AG04449 (cell line): ENCODE measurements at regions of chr17 and their contacts with region 1.

Region 1: GRCh38 chr17:8057691-8058114 is 18.8 kb downstream of the ALOX15B start:
- DNase-seq: no peak
- H3K4me3 ChIP-seq: no peak overlapping the region
- CTCF ChIP-seq: peak; percentile 68

Region 2: GRCh38 chr17:7589204-7589868 is 468.4 kb before region 1 on chr17:
- CTCF ChIA-PET with region 1: no interaction called
- POLR2A ChIA-PET with region 1: no interaction called
- DNase-seq: no peak
- H3K4me3 ChIP-seq: peak overlapping the region; percentile 6; the same call in 1 of the 2 replicates
- CTCF ChIP-seq: peak; percentile 89

Region 3: DNA sequence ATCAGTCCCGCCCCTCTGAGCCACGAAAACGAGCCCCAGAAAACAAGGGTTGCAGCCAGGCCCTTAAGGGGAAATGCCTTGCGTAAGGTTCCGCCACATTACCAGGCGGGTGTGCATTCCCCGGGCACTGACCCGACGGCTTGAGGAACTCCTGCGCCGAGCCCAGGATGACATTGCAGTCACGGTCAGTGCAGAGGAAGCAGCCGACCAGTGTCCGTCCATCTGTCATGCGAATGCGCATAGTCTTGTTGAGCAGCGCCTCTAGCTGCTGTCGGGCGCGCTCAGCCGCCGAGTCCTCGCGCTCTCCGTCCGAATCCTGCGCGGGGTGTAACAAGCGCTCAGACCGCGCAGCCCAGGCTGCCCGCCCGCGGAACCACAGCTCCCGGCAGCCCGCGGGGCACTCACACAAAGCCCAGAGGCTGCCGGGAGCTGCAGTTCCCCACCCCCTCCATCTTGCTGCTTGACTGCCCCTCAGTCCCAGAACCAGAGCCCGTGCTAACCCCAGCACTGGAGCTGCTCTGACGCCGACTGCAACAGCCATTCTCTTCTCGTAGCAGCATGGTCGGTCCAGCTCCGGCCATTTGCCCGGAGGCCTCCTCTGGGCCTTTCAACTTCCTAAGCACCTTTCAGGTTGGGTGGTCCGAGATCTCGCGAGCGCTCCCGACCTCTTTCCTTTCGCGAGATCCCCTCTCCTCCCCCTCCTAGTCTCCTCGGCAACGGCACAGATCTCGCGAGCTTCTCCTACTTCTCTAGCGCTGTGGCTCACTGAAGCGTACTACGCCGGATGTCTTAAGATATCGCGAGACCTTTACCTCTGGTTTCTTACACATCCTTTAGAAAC is 200.6 kb before region 1 on chr17 and contains the start of gene NAA38:
- CTCF ChIA-PET with region 1: interaction called, 77 read pairs
- POLR2A ChIA-PET with region 1: no interaction called
- DNase-seq: peak; percentile 97
- H3K4me3 ChIP-seq: peak within 1 kb of the TSS; percentile 80
- CTCF ChIP-seq: peak; percentile 71

Region 4: DNA sequence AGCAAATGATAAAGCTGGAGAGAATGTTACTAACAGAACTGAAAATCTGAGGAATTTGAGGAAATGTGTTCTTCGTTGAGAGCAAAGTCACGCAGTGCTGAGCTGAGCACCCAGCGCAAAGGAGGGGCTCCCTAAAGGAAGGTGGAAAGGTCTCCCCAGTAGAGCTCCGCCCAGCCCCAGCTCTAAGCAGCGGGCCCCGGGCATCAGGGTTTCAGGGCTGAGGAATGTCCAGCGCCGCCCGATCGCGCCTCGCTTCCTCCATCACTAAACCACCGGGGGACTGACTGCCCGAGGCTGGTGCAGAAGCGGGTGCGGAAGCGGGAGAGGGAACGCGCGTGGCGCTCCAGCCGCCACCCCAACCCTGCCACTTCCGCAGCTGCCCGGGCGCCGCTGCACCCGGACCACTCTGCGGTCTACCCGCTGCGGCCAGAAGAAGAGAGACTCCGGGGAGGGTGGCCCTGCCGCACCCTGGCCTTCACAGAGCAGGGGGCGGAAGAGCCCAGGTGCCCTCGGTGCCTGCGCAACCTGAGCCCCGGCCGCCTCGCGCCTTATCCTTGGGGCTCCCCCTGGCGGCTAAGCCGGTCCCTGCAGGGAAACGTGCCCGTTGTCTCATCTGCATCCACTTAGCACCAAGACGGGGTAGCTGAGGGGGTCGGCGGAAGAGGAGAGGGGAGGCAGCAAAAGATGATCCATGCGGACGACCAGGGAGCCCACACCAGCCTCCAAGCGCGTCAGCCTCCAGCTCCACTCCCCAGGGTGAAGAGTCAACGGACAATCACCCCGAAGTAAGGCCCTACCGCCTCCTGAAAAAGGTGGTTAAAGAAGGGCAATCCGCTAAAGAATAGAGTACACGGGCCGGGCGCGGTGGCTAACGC is 67.7 kb before region 1 on chr17:
- CTCF ChIA-PET with region 1: interaction called, 61 read pairs
- POLR2A ChIA-PET with region 1: no interaction called
- DNase-seq: no peak
- H3K4me3 ChIP-seq: peak overlapping the region; percentile 66
- CTCF ChIP-seq: peak; percentile 97

Region 5: DNA sequence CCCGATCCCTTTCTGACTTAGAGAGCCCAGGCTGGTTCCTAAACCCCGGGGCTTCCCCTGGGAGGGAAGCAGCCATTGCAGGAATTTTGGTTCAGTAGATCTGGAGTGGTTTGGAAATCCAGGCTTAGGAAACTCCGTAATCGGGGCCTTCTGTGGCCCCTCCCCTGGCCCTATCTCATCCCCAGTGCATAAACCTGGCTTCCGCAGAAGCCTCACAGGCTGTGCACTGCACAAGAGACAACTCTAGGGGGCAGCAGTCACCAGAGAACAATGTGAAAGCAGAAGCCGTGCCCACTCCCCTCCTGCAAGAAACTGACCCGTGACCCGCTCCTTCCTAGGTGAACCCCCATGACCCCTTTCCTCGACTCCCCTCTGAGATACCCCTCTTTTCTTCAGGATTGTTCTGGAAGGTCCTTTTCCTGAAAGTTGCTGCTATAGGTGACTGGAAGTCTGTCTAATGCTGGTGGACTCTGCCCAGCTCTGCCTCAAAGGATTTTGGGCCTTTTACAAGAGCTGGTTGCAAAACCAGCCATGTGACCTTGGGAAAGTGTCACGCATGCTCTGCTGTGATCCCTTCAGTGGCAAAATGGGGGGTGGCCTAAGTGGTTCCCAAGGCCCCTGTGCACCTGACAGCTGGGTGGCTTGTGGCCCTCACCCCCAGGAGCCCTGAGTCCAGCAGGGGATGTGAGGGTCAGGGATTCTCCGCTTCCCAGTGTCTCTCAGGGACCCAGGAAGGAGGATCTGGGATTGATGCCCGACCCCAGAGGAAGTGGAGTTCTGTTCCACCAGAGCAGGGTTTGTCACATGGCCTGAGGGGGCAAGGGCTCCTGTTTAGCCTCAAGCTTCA is 40.8 kb before region 1 on chr17:
- CTCF ChIA-PET with region 1: interaction called, 10 read pairs
- POLR2A ChIA-PET with region 1: no interaction called
- DNase-seq: no peak
- H3K4me3 ChIP-seq: no peak overlapping the region
- CTCF ChIP-seq: peak; percentile 44

Region 6: DNA sequence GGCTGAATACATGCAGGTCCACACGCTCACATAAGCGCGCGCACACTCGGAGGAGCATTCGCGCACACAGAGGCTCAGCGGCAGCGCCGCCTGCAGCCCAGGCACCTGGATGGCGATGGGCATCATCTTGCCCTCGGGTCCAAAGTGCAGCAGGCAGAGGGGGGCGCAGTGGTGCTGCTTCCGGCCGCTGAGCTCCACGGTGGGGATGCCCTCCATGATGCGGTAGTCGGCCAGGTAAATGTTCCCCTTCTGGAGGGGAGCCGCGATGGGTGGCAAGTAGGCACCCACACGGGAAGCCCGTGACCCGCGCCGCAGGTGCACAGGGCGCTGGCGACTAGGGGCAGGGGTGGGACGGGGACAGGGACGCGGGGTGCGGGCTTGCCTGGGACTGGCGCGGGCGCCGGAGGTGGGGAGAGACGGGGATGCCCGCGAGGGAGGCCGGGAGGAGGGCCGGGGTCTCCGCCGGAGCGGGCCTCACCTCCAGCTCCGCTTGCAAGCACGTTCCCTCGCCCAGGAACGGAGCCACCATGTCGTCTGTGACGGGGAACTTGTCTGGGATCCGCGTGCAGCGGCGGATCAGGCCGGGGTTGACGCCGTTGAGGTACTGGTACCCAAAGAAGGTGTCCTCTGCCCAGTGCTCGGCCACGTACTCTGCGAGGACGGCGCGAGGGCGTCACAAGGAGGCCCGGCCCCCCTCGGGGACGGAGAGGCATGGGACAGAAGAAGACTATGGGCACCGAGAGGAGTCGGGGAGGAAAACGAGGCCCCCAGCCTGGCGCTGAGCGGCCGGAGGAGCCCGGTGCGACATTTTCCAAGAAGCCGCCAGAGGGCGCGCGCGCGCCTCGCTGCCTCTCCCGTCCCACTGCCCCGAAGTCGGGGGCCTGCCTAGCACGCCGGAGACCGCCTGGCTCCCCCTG is 21.8 kb after region 1 on chr17:
- CTCF ChIA-PET with region 1: interaction called, 233 read pairs
- POLR2A ChIA-PET with region 1: no interaction called
- DNase-seq: no peak
- H3K4me3 ChIP-seq: peak overlapping the region; percentile 55
- CTCF ChIP-seq: peak; percentile 88

Region 7: GRCh38 chr17:8138672-8139371 is 81.1 kb after region 1 on chr17:
- CTCF ChIA-PET with region 1: interaction called, 10 read pairs
- POLR2A ChIA-PET with region 1: no interaction called
- DNase-seq: peak; percentile 85
- H3K4me3 ChIP-seq: peak overlapping the region; percentile 65
- CTCF ChIP-seq: peak; percentile 79

Region 8: DNA sequence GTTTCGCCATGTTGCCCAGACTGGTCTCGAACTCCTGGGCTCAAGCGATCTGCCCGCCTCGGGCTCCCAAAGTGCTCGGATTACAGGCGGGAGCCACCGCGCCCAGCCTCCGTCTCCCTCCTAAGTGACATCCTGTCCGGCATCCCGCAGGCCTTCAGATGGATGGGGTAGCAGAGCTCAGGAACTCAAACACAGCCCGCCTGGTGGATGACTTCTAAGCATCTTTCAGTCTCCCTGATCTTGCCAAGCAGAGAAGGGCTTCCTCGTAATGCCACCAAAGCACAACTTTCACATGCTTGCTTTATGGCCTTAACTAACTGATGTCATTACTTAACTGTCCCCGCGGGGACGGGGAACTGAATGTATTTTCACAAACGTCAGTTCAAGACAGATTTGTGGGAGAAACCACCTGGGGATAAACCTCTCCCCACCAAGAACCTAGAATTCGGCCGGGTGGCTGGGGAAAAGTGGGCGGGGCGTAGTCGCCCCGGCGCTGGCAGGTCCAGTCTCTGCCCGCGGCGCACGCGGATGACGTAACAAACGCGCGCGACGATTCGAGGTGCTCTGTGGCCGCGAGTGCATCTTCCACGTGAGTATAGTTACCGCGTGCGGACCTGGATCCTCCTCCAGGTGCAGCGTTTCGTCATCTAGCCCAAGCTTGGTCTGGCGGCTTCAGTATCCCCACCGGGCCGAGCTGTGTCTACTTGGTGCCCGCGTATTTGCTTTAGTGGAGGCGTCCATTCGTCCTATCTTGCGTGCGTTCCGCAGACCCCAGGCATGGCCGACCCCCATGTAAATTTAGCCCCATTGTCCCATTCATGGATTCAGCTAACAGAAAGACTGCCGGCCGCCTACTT is 191.3 kb after region 1 on chr17 and contains the start of gene PFAS:
- CTCF ChIA-PET with region 1: no interaction called
- POLR2A ChIA-PET with region 1: no interaction called
- DNase-seq: peak; percentile 45
- H3K4me3 ChIP-seq: peak within 1 kb of the TSS; percentile 99
- CTCF ChIP-seq: no peak